ENCODE measurements at regions of chr12 and their contacts with region 1.

Region 1: GRCh38 chr12:6285063-6285477 is 25.4 kb upstream of the PLEKHG6 start:
- DNase-seq: peak; percentile 70
- ATAC-seq: peak; percentile 78
- H3K4me3 ChIP-seq: no peak overlapping the region
- H3K27ac ChIP-seq: no peak overlapping the region
- H3K4me1 ChIP-seq: peaks cover 63% of the 10 kb centered on the region
- H3K27me3 ChIP-seq: no peaks in the 10 kb centered on the region
- CTCF ChIP-seq: peak; percentile 92
- EP300 ChIP-seq: no peak
- POLR2A ChIP-seq: no peak
- RAD21 ChIP-seq: peak; percentile 95

Region 2: GRCh38 chr12:5988659-5989116 is 296.4 kb before region 1 on chr12:
- CTCF ChIA-PET with region 1: interaction called, 9 read pairs
- POLR2A ChIA-PET with region 1: no interaction called
- in situ Hi-C with region 1: loop called (anchors 10 kb)
- intact Hi-C with region 1: loop called (anchors 10 kb)
- DNase-seq: peak; percentile 37
- ATAC-seq: peak; percentile 97
- H3K4me3 ChIP-seq: no peak overlapping the region
- H3K27ac ChIP-seq: no peak overlapping the region
- H3K4me1 ChIP-seq: peaks cover 13% of the 10 kb centered on the region
- H3K27me3 ChIP-seq: no peaks in the 10 kb centered on the region
- CTCF ChIP-seq: peak; percentile 94
- EP300 ChIP-seq: no peak
- POLR2A ChIP-seq: no peak
- RAD21 ChIP-seq: peak; percentile 94

Region 3: GRCh38 chr12:6062757-6063735 is 222.0 kb before region 1 on chr12:
- CTCF ChIA-PET with region 1: interaction called, 11 read pairs
- POLR2A ChIA-PET with region 1: interaction called, 8 read pairs
- in situ Hi-C with region 1: no loop called
- intact Hi-C with region 1: loop called (anchors 1 kb)
- DNase-seq: peak; percentile 24
- ATAC-seq: peak; percentile 73
- H3K4me3 ChIP-seq: peak overlapping the region in 1 of 3 experiments; percentile 42; a peak in 1 of 6 replicates
- H3K27ac ChIP-seq: no peak overlapping the region
- H3K4me1 ChIP-seq: peaks cover 54% of the 10 kb centered on the region
- H3K27me3 ChIP-seq: peaks cover 0 to 15% of the 10 kb centered on the region in 2 experiments; a peak in 2 of 5 replicates
- CTCF ChIP-seq: peak; percentile 95
- EP300 ChIP-seq: no peak
- POLR2A ChIP-seq: no peak
- RAD21 ChIP-seq: peak; percentile 89

Region 4: DNA sequence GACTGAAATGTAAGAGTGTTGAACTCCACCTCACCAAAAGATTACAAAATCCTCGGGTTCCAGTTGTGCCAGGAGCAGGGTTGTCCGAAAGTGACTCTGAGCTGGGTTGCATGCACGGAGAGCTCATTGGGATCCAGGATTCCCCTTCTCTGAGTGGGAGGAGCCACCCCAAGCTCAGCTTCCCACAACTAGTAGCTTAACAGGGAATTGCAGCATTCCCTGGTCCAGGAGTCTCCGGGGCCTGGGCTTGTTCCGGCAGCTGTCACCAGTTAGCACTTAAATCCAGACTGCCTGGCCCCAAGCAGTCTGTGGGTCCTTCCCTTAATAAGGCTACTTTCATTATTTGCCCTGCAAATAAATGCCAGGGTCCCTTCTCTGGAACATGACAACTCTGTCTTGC is 34.7 kb before region 1 on chr12:
- CTCF ChIA-PET with region 1: no interaction called
- POLR2A ChIA-PET with region 1: no interaction called
- in situ Hi-C with region 1: no loop called
- intact Hi-C with region 1: no loop called
- DNase-seq: no peak
- ATAC-seq: no peak; the same call in 2 of the 3 replicates
- H3K4me3 ChIP-seq: no peak overlapping the region
- H3K27ac ChIP-seq: no peak overlapping the region
- H3K4me1 ChIP-seq: no peaks in the 10 kb centered on the region
- H3K27me3 ChIP-seq: peaks cover 3 to 44% of the 10 kb centered on the region in 2 experiments; a peak in 4 of 5 replicates
- CTCF ChIP-seq: no peak
- EP300 ChIP-seq: no peak
- POLR2A ChIP-seq: no peak
- RAD21 ChIP-seq: no peak

Region 5: GRCh38 chr12:6328945-6329702 is 44.1 kb after region 1 on chr12:
- CTCF ChIA-PET with region 1: no interaction called
- POLR2A ChIA-PET with region 1: no interaction called
- in situ Hi-C with region 1: no loop called
- intact Hi-C with region 1: no loop called
- DNase-seq: no peak
- ATAC-seq: no peak
- H3K4me3 ChIP-seq: no peak overlapping the region
- H3K27ac ChIP-seq: no peak overlapping the region
- H3K4me1 ChIP-seq: peaks cover 19% of the 10 kb centered on the region
- H3K27me3 ChIP-seq: no peaks in the 10 kb centered on the region
- CTCF ChIP-seq: no peak
- EP300 ChIP-seq: no peak
- POLR2A ChIP-seq: no peak
- RAD21 ChIP-seq: no peak

Measured in HepG2 (cell line).